AG04449 (cell line): ENCODE measurements at regions of chr4 and their contacts with region 1.

Region 1: GRCh38 chr4:77959566-77960338 is 97.1 kb downstream of the MRPL1 start:
- DNase-seq: peak; percentile 5
- H3K4me3 ChIP-seq: no peak overlapping the region
- CTCF ChIP-seq: peak; percentile 46

Region 2: DNA sequence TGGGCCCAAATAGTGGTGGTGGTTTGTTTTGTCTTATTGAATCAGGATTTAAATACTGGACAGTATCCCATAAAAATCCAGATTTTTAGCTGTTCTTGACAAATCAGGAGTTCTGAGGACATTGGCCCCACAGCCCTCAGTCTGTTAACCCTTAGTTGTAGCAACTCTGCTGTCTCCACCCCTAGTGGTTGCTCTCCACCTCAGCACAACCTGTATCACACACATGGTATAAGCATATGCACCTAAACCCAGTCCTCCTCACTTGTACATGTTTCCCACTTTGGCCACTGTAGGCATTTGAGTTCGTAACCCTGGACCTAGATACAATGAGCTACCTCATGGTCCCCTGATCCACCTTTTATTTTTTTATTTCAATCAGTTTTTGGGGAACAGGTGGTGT is 21.2 kb before region 1 on chr4:
- CTCF ChIA-PET with region 1: interaction called, 16 read pairs
- POLR2A ChIA-PET with region 1: no interaction called
- DNase-seq: no peak
- H3K4me3 ChIP-seq: no peak overlapping the region
- CTCF ChIP-seq: no peak